ENCODE measurements at regions of chr6 and their contacts with region 1.

Region 1: DNA sequence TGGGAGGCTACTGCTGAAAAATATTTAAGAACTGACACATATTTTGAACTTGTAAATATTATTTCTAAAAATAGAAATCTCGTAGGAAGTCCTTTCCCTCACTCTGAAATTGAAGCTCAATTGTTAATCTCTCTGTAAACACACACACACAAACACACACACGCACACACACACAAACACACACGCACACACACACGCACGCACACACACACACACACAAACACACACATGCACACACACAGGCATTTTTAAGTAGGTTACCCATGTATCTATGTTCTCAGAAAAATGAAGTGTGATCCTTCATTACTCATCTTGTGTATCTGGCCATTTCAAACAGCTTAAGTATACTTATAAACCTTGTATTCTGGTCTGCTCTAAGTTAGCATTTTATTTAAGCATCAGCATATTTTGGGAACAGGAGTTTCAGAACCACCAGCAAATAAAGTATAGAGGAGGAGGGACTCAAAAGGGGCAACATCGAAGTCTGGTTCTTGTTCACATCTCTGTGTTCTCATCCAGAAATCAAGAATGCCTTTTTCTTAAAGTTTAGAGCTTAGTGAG is 11.6 kb downstream of the CCN6 start:
- DNase-seq: no peak
- ATAC-seq: no peak
- H3K4me3 ChIP-seq: no peak overlapping the region
- H3K27ac ChIP-seq: no peak overlapping the region
- H3K4me1 ChIP-seq: no peaks in the 10 kb centered on the region
- H3K27me3 ChIP-seq: no peaks in the 10 kb centered on the region
- CTCF ChIP-seq: no peak

Region 2: DNA sequence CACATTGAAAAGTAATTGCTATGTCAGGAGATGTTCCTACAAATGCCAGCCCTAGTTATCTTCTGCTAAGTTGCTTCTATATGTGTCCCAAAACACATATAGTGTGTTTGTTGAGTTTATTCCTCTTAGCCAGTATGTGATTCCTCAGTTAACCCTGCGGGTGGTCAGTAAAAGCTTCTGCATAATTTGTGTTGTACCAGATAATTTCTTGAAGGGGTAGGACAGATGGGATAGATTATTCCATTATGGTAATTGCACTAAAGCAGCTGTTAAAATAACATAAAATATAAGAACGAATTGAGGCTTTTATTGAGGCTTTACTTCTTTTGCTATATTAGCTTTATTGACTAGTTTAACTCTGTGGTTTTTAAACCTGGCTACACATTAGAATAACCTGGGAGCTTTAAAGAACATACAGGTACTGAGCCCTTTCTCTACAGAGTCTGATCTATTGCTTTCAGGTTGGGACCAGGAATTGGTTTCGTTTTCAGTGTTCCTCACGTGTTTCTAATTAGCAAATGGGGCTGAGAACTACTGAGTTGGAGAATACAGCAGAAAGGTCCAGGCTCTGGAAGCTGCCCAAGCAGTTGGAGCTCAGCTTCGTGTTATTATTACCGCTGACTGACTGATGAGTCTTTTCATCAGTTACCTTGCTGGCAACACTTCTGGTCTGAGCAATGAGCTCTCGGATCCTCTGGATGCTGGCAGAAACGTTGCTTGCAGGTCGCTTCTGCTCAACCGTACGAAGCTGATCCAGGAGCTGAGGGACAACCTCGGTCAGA is 78.8 kb after region 1 on chr6:
- intact Hi-C with region 1: loop called in 2 of 10 experiments (anchors 5 to 10 kb)
- DNase-seq: no peak
- ATAC-seq: no peak
- H3K4me3 ChIP-seq: no peak overlapping the region
- H3K27ac ChIP-seq: no peak overlapping the region
- H3K4me1 ChIP-seq: peaks cover 0 to 8% (median 2%) of the 10 kb centered on the region in 9 donors
- H3K27me3 ChIP-seq: no peaks in the 10 kb centered on the region
- CTCF ChIP-seq: no peak